ENCODE measurements at regions of chr5 and their contacts with region 1.

Region 1: DNA sequence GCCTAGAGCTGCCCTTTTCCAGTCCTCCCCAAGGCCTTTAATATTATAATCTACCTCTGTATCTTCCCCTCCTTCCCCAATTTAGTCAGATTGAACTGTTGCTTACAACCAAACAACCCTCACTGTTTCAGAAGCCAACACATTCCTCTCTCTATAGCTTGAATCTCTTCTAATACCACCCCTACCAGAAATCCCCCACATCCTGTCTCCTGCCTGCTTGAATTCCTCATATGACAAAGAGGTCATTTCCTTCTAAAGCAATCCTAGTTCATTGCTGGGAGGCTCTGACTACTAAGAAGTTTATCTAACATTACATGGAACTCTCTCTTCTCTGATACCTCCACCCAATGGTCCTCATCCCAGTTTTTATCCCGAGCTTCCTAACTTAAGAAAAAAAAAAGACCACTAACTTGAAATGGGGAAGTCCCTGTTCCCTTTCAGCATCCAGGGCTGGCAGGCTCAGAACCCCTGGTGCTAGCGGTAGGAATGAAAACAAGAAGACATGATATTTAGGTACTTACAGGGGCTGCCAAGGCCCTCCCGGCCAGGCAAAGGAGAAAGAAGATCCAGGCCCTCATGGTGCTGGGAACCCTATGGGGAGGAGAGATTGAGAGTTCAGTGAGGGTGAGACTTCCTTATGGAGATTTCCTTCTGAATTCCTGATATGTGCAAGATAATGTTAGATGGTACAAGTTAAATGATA is 11.0 kb downstream of the SPARC start:
- DNase-seq: no peak
- H3K4me3 ChIP-seq: no peak overlapping the region
- H3K27ac ChIP-seq: peak overlapping the region; percentile 50 to 77
- H3K4me1 ChIP-seq: peaks cover 6% of the 10 kb centered on the region
- H3K27me3 ChIP-seq: no peaks in the 10 kb centered on the region
- CTCF ChIP-seq: no peak
- POLR2A ChIP-seq: no peak

Region 2: GRCh38 chr5:151252762-151253604 is 422.8 kb before region 1 on chr5 and contains the start of gene GM2A:
- intact Hi-C with region 1: loop called (anchors 10 kb)
- DNase-seq: peak; percentile 99
- H3K4me3 ChIP-seq: peak within 1 kb of the TSS; percentile 51 to 63
- H3K27ac ChIP-seq: peak within 1 kb of the TSS; percentile 55 to 65
- H3K4me1 ChIP-seq: no peaks in the 10 kb centered on the region
- H3K27me3 ChIP-seq: no peaks in the 10 kb centered on the region
- CTCF ChIP-seq: peak in 1 of 4 experiments; percentile 17
- POLR2A ChIP-seq: peak; percentile 94
- total RNA-seq, gene GM2A: 48.9 to 60.0 TPM

Region 3: DNA sequence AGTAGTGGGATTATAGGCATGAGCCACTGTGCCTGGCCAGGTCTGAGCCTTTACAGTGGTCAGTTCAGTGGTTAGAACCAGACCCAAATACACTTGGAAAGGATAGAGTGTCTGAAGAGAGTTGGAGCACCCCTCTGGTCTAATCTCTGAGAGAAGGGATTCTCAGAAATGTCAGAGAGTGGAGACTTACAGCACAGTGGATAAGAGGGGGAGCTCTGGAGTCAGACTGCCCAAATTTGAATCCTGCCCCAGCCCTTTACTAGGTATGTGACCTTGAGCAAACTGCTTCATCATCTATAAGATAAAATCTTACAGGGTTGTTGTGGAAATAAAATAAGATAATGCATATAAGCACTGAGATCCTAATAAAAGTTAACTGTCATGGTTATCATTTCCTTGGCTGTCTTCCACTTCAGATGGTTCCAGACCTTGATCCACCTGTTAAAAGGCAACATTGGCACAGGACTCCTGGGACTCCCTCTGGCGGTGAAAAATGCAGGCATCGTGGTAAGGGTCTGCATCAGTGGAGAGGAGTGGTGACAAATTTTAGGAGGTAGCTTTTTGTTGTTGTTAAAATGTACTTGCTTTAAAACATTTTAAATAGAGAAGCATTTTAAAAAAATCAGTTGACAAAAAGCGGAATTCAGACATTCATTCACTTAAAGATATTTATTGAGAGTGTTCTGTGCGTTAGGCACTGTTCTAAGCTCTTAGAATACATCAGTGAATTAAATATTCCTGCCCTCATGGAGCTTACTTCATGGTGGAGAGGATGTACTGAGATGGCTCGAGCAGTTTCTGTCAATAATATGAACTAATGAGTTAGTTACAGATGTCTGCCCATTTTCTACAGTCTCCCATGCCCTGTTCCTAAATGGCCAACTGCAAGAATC is 212.4 kb before region 1 on chr5:
- intact Hi-C with region 1: no loop called
- DNase-seq: peak; percentile 51
- H3K4me3 ChIP-seq: no peak overlapping the region
- H3K27ac ChIP-seq: no peak overlapping the region
- H3K4me1 ChIP-seq: no peaks in the 10 kb centered on the region
- H3K27me3 ChIP-seq: no peaks in the 10 kb centered on the region
- CTCF ChIP-seq: peak; percentile 22 to 65 (median 60)
- POLR2A ChIP-seq: no peak

Region 4: DNA sequence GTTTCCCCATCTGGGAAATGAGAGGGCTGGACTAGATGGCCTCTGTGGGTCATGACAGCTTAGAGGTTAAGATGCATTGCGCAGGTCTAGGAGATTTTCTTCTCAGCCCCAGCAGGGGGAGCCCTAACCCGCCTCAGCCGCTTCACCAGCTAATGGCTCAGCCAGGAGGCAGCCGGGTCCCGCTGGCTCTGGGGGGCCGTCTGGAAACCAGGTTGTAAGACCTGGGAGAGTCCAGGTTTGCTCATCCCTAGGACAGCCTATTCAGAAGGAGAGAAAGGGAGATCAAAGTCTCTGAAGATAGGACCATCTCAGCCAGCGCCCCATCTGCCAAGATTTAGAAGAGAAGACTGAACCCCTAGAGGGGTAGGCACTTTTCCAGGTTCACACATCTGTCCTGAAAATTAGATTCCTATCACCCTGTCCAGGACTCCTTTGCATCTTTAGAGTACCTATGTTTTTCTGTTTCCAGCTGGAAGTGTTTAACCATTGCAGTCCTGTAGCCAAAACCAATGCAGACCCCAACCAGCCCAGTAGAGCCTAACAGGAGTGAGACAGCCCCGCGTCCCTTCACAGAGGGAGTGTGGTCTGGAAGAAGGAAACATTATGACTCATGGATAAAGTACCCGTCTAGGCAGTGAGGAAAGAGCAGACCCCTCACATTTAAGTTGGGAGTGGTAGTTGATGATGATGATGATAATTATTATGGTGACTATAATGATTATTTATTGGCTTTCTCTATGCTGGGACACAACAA is 16.6 kb before region 1 on chr5:
- intact Hi-C with region 1: no loop called
- DNase-seq: peak; percentile 49
- H3K4me3 ChIP-seq: no peak overlapping the region
- H3K27ac ChIP-seq: no peak overlapping the region
- H3K4me1 ChIP-seq: no peaks in the 10 kb centered on the region
- H3K27me3 ChIP-seq: no peaks in the 10 kb centered on the region
- CTCF ChIP-seq: peak; percentile 80 to 89 (median 86)
- POLR2A ChIP-seq: no peak

Region 5: GRCh38 chr5:151719228-151720000 is 43.7 kb after region 1 on chr5:
- intact Hi-C with region 1: no loop called
- DNase-seq: no peak
- H3K4me3 ChIP-seq: no peak overlapping the region
- H3K27ac ChIP-seq: no peak overlapping the region
- H3K4me1 ChIP-seq: no peaks in the 10 kb centered on the region
- H3K27me3 ChIP-seq: no peaks in the 10 kb centered on the region
- CTCF ChIP-seq: peak in 3 of 4 experiments; percentile 30 to 44 (median 40)
- POLR2A ChIP-seq: no peak

Region 6: DNA sequence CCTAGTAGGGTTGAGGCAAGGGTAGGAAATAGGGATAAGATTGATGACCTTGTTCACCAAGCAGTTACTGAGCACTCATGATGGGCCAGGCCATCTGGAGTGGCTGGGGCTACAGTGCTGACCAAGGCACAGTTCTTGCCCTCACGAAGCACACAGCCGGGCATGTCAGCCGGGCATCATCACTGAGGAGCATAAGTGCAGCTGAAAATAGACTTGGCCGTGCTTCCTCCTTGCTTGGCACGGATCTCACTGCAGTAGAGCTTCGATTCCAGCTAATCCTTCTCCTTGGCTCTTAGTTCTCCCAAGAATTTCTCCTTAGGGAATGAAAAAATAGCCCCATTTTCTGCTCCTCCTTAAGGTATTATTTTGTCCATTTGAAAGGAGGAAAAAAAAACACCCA is 612.7 kb after region 1 on chr5:
- intact Hi-C with region 1: no loop called
- DNase-seq: no peak
- H3K4me3 ChIP-seq: no peak overlapping the region
- H3K27ac ChIP-seq: no peak overlapping the region
- H3K4me1 ChIP-seq: no peaks in the 10 kb centered on the region
- H3K27me3 ChIP-seq: no peaks in the 10 kb centered on the region
- CTCF ChIP-seq: no peak
- POLR2A ChIP-seq: no peak